ENCODE measurements at regions of chr1 and their contacts with region 1.

Region 1: GRCh38 chr1:9494929-9495758 is 44.1 kb upstream of the SLC25A33 start:
- DNase-seq: peak; percentile 81
- ATAC-seq: peak; percentile 71
- H3K4me3 ChIP-seq: peak overlapping the region in 3 of 5 experiments; percentile 44 to 64 (median 44)
- H3K4me3 Mint-ChIP-seq: peak overlapping the region; percentile 80
- H3K27ac ChIP-seq: no peak overlapping the region
- H3K27ac Mint-ChIP-seq: no peak overlapping the region
- H3K4me1 ChIP-seq: peaks cover 9 to 10% of the 10 kb centered on the region in 2 donors
- H3K4me1 Mint-ChIP-seq: peaks cover 8% of the 10 kb centered on the region
- H3K27me3 ChIP-seq: peaks cover 0 to 6% (median 2%) of the 10 kb centered on the region in 4 experiments
- H3K27me3 Mint-ChIP-seq: peaks cover 17% of the 10 kb centered on the region
- CTCF ChIP-seq: peak; percentile 98

Region 2: GRCh38 chr1:9110669-9111356 is 384.3 kb before region 1 on chr1:
- CTCF ChIA-PET with region 1: interaction called, 15 read pairs
- POLR2A ChIA-PET with region 1: no interaction called
- intact Hi-C with region 1: no loop called
- DNase-seq: peak; percentile 85
- ATAC-seq: peak; percentile 95
- H3K4me3 ChIP-seq: no peak overlapping the region
- H3K4me3 Mint-ChIP-seq: no peak overlapping the region
- H3K27ac ChIP-seq: no peak overlapping the region
- H3K27ac Mint-ChIP-seq: no peak overlapping the region
- H3K4me1 ChIP-seq: peaks cover 0 to 5% of the 10 kb centered on the region in 2 donors
- H3K4me1 Mint-ChIP-seq: peaks cover 2% of the 10 kb centered on the region
- H3K27me3 ChIP-seq: no peaks in the 10 kb centered on the region
- H3K27me3 Mint-ChIP-seq: no peaks in the 10 kb centered on the region
- CTCF ChIP-seq: peak; percentile 91

Region 3: GRCh38 chr1:9201401-9202239 is 293.5 kb before region 1 on chr1:
- CTCF ChIA-PET with region 1: interaction called, 10 read pairs
- POLR2A ChIA-PET with region 1: no interaction called
- intact Hi-C with region 1: loop called (anchors 1 kb)
- DNase-seq: no peak
- ATAC-seq: no peak
- H3K4me3 ChIP-seq: no peak overlapping the region
- H3K4me3 Mint-ChIP-seq: peak overlapping the region; percentile 21
- H3K27ac ChIP-seq: no peak overlapping the region
- H3K27ac Mint-ChIP-seq: no peak overlapping the region
- H3K4me1 ChIP-seq: peaks cover 19 to 22% of the 10 kb centered on the region in 2 donors
- H3K4me1 Mint-ChIP-seq: peaks cover 32% of the 10 kb centered on the region
- H3K27me3 ChIP-seq: peaks cover 0 to 77% (median 50%) of the 10 kb centered on the region in 4 experiments
- H3K27me3 Mint-ChIP-seq: peaks cover 72% of the 10 kb centered on the region
- CTCF ChIP-seq: no peak

Region 4: GRCh38 chr1:9270290-9270883 is 224.8 kb before region 1 on chr1:
- CTCF ChIA-PET with region 1: interaction called, 44 read pairs
- POLR2A ChIA-PET with region 1: no interaction called
- intact Hi-C with region 1: loop called (anchors 1 kb)
- DNase-seq: no peak
- ATAC-seq: no peak
- H3K4me3 ChIP-seq: no peak overlapping the region
- H3K4me3 Mint-ChIP-seq: no peak overlapping the region
- H3K27ac ChIP-seq: no peak overlapping the region
- H3K27ac Mint-ChIP-seq: no peak overlapping the region
- H3K4me1 ChIP-seq: no peaks in the 10 kb centered on the region
- H3K4me1 Mint-ChIP-seq: peaks cover 3% of the 10 kb centered on the region
- H3K27me3 ChIP-seq: no peaks in the 10 kb centered on the region
- H3K27me3 Mint-ChIP-seq: no peaks in the 10 kb centered on the region
- CTCF ChIP-seq: no peak

Region 5: GRCh38 chr1:9455487-9456234 is 39.5 kb before region 1 on chr1:
- CTCF ChIA-PET with region 1: interaction called, 36 read pairs
- POLR2A ChIA-PET with region 1: interaction called, 8 read pairs
- intact Hi-C with region 1: no loop called
- DNase-seq: peak; percentile 80
- ATAC-seq: peak; percentile 77
- H3K4me3 ChIP-seq: no peak overlapping the region
- H3K4me3 Mint-ChIP-seq: no peak overlapping the region
- H3K27ac ChIP-seq: no peak overlapping the region
- H3K27ac Mint-ChIP-seq: no peak overlapping the region
- H3K4me1 ChIP-seq: peaks cover 0 to 3% of the 10 kb centered on the region in 2 donors
- H3K4me1 Mint-ChIP-seq: peaks cover 3% of the 10 kb centered on the region
- H3K27me3 ChIP-seq: no peaks in the 10 kb centered on the region
- H3K27me3 Mint-ChIP-seq: no peaks in the 10 kb centered on the region
- CTCF ChIP-seq: peak; percentile 92

Region 6: DNA sequence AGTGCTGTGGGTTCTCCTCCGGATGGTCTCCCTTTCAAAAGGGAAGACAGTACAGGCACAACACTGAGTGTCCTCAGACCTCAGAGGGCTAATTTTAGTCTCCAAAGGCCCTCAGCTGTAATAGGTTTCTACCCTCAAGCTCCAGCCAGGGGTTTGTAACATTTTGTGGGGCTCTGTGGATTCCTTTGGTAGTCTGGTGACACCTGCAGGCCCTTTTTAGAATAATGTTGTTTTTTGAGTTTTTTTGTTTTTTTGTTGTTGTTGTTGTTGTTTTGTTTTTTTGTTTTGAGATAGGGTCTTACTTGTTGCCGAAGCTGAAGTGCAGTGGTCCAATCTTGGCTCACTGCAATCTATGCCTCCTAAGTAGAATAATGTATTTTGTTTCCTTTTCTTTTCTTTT is 78.6 kb after region 1 on chr1:
- CTCF ChIA-PET with region 1: interaction called, 64 read pairs
- POLR2A ChIA-PET with region 1: no interaction called
- intact Hi-C with region 1: loop called (anchors 1 kb)
- DNase-seq: no peak
- ATAC-seq: no peak
- H3K4me3 ChIP-seq: no peak overlapping the region
- H3K4me3 Mint-ChIP-seq: no peak overlapping the region
- H3K27ac ChIP-seq: no peak overlapping the region
- H3K27ac Mint-ChIP-seq: no peak overlapping the region
- H3K4me1 ChIP-seq: no peaks in the 10 kb centered on the region
- H3K4me1 Mint-ChIP-seq: peaks cover 5% of the 10 kb centered on the region
- H3K27me3 ChIP-seq: no peaks in the 10 kb centered on the region
- H3K27me3 Mint-ChIP-seq: no peaks in the 10 kb centered on the region
- CTCF ChIP-seq: peak; percentile 30

Region 7: DNA sequence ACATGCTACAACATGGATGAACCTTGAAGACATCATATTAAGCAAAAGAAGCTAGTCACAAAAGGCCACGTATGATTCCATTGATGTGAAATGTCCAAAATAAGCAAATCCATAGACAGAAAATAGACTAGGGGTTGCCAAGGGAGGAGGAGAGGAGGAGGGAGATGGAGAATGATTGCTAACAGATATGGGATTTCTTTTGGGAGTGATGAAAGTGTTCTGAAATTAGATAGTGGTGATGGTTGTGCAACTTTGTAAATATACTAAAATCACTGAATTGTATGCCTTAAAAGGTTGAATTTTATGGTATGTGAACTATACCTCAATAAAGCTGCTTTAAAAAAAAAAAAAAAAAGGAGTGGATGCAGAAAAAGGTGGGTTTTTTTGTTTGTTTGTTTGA is 321.1 kb after region 1 on chr1:
- CTCF ChIA-PET with region 1: no interaction called
- POLR2A ChIA-PET with region 1: no interaction called
- intact Hi-C with region 1: no loop called
- DNase-seq: no peak
- ATAC-seq: no peak
- H3K4me3 ChIP-seq: no peak overlapping the region
- H3K4me3 Mint-ChIP-seq: no peak overlapping the region
- H3K27ac ChIP-seq: no peak overlapping the region
- H3K27ac Mint-ChIP-seq: no peak overlapping the region
- H3K4me1 ChIP-seq: peaks cover under 1 to 6% of the 10 kb centered on the region in 2 donors
- H3K4me1 Mint-ChIP-seq: peaks cover 18% of the 10 kb centered on the region
- H3K27me3 ChIP-seq: no peaks in the 10 kb centered on the region
- H3K27me3 Mint-ChIP-seq: no peaks in the 10 kb centered on the region
- CTCF ChIP-seq: no peak

Measured in B cell (primary cell).